Right cardiac atrium (tissue), 5 donors: ENCODE measurements at regions of chr18 and their contacts with region 1.

Region 1: GRCh38 chr18:60549338-60549960 is 176.9 kb upstream of the MC4R start:
- DNase-seq: no peak
- ATAC-seq: no peak
- H3K4me3 ChIP-seq: no peak overlapping the region
- H3K27ac ChIP-seq: no peak overlapping the region
- H3K4me1 ChIP-seq: no peaks in the 10 kb centered on the region
- H3K27me3 ChIP-seq: no peaks in the 10 kb centered on the region

Region 2: GRCh38 chr18:59837586-59837985 is 711.9 kb before region 1 on chr18:
- intact Hi-C with region 1: loop called in 3 of 4 experiments (anchors 10 kb)
- DNase-seq: no peak
- ATAC-seq: peak in 1 of 2 donors; percentile 56
- H3K4me3 ChIP-seq: no peak overlapping the region
- H3K27ac ChIP-seq: no peak overlapping the region
- H3K4me1 ChIP-seq: no peaks in the 10 kb centered on the region
- H3K27me3 ChIP-seq: no peaks in the 10 kb centered on the region

Region 3: DNA sequence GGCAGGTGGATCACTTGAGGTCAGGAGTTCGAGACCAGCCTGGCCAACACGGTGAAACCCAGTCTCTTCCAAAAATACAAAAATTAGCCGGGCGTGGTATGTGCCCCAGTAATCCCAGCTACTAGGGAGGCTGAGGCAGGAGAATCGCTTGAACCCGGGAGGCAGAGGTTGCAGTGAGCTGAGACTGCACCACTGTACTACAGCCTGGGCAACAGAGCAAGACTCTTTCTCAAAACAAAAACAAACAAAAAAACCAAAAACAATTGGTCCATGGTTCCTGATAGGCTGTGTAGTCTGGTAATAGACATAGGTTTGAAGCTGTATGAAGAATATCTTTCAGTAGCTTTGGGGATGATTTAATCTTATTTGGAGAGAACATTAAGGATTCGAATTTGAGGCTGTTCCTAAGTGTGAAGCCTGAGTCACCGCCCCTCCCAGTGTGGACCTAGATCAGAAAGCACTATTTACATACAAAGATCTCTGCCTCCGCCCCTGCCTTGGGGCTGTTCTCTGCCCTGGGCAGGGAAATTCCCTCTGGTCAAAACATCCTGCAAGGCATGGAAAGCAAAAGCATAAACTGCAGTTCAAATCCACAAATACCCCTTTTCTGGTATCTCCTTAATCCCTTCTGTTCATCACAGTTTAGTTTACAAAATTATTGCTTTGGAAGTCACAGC is 702.5 kb before region 1 on chr18:
- intact Hi-C with region 1: loop called in 1 of 4 experiments (anchors 10 kb)
- DNase-seq: no peak
- ATAC-seq: no peak
- H3K4me3 ChIP-seq: no peak overlapping the region
- H3K27ac ChIP-seq: no peak overlapping the region
- H3K4me1 ChIP-seq: no peaks in the 10 kb centered on the region
- H3K27me3 ChIP-seq: no peaks in the 10 kb centered on the region

Region 4: GRCh38 chr18:59988098-59988706 is 561.2 kb before region 1 on chr18:
- intact Hi-C with region 1: loop called in 3 of 4 experiments (anchors 5 to 10 kb)
- DNase-seq: peak in 1 of 3 donors; percentile 30
- ATAC-seq: no peak
- H3K4me3 ChIP-seq: no peak overlapping the region
- H3K27ac ChIP-seq: no peak overlapping the region
- H3K4me1 ChIP-seq: no peaks in the 10 kb centered on the region
- H3K27me3 ChIP-seq: no peaks in the 10 kb centered on the region

Region 5: GRCh38 chr18:60493066-60493465 is 56.4 kb before region 1 on chr18:
- intact Hi-C with region 1: no loop called
- DNase-seq: no peak
- ATAC-seq: no peak
- H3K4me3 ChIP-seq: no peak overlapping the region
- H3K27ac ChIP-seq: no peak overlapping the region
- H3K4me1 ChIP-seq: no peaks in the 10 kb centered on the region
- H3K27me3 ChIP-seq: no peaks in the 10 kb centered on the region

Region 6: GRCh38 chr18:60599267-60599666 is 49.8 kb after region 1 on chr18:
- intact Hi-C with region 1: no loop called
- DNase-seq: no peak
- ATAC-seq: no peak
- H3K4me3 ChIP-seq: no peak overlapping the region
- H3K27ac ChIP-seq: no peak overlapping the region
- H3K4me1 ChIP-seq: no peaks in the 10 kb centered on the region
- H3K27me3 ChIP-seq: no peaks in the 10 kb centered on the region